AG04450 (cell line): ENCODE measurements at regions of chr21 and their contacts with region 1.

Region 1: DNA sequence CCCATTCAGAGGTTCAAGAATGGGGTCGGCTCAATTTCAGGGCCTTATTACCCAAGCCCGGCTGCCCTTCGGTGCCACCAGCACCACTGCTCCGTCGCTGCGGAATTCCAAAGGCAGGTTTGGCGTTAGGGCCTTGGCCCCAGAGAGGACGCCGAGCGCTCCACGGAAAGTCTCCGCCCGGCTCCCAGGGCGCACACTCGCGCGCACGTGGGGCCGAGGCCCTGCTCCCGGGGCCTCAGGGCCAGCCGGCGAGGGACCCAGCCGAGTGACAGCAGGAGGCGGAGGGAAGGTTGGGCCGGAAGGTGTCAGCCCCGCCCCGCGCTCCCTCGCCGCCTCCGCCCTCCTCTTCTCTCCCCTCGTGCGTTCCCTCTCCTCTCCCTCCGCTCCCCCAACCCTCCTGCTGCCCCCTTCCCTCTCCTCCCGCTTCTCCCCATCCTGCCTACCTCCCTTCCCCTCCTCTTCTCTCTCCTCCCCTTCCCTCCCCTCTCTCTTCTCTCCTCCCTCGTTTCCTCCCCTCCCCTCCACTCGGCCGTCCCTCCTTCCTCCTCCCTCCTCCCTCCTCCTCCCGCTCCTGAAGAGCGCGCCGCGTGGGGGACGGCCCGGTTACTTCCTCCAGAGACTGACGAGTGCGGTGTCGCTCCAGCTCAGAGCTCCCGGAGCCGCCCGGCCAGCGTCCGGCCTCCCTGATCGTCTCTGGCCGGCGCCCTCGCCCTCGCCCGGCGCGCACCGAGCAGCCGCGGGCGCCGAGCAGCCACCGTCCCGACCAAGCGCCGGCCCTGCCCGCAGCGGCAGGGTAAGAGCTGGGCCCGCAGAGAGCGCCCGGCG is at the start of gene ETS2:
- DNase-seq: peak; percentile 80
- H3K4me3 ChIP-seq: peak within 1 kb of the TSS; percentile 88
- H3K27ac ChIP-seq: peak within 1 kb of the TSS; percentile 41
- H3K27me3 ChIP-seq: no peaks in the 10 kb centered on the region
- CTCF ChIP-seq: no peak; the same call in 1 of the 2 replicates
- polyA plus RNA-seq, gene ETS2: 60.1 and 62.7 TPM in 2 replicates

Region 2: DNA sequence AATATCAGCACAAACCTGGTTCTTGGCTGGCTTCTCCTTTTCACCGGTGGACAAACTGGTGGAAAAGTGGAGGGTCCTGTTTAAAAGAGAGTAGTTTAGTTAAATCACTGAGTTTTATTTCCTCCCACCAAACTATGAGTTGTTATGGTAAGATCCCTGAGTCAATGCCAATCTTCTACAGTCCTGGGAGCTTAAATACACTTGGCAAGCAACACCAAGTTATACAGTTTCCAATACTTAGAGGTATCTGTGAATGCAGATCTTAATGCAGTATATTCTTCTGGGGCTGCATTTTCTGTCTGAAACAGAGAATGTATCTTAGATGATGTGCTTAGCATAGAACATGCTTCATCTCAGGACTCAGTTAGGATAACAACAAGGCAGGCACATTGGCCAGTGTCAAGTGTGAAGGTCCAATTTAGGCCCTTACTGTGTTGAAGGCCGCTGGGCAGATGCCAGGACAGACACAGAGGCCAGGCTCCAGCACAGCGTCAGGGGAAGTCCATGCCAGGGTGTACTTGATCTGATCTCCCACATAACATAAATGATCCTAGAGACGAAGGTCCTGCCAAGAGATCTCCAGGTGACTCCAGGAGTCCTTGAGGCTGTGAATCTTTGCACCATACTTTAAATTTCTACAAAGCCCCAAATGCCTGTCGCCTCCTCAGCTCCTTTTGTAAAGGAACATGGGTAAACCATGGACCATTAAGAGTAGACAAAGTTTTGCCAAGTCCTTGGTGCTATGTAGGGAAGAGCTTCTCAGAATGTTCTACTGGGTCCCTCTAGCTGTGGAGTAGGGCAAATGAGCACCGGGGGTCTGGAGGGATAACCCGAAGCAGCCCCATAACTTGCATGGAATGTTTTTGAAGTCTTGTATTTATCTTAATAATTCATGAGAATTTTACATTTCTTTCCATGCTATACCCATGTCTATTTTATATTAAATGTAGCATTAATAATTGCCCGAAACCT is 472.0 kb before region 1 on chr21:
- CTCF ChIA-PET with region 1: no interaction called
- POLR2A ChIA-PET with region 1: no interaction called
- DNase-seq: no peak
- H3K4me3 ChIP-seq: no peak overlapping the region
- H3K27ac ChIP-seq: no peak overlapping the region
- H3K27me3 ChIP-seq: peaks cover 4% of the 10 kb centered on the region
- CTCF ChIP-seq: peak; percentile 43

Region 3: GRCh38 chr21:38755681-38756371 is 49.7 kb before region 1 on chr21:
- CTCF ChIA-PET with region 1: interaction called, 3 read pairs
- POLR2A ChIA-PET with region 1: interaction called, 10 read pairs
- DNase-seq: peak; percentile 78
- H3K4me3 ChIP-seq: no peak overlapping the region
- H3K27ac ChIP-seq: peak overlapping the region; percentile 79
- H3K27me3 ChIP-seq: no peaks in the 10 kb centered on the region
- CTCF ChIP-seq: no peak

Region 4: DNA sequence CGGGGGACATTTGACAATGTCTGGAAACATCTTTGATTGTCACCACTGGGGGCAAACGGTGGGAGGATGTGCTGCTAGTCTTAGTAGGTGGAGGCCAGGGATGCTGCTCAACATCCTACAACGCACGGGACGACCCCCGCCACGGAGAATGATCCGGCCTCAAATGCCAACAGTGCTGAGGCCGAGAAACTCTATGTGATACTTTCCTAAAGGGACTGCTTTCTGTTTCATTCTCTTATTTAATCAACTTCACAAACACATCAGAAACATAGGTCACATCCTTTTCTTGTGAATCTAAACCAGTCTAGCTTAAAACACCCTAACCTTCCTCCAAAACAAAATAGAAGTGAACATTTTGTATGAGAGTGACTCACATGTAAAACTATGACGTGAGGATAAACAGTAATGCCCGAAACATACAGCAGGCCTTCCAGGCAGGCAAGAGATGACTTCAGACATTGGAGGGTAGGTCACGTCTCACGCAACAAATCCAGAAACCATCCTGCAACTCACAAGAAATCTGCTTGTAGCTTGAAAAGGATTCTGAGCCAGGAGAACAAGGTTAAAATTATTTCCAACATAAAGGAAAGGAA is 37.0 kb before region 1 on chr21:
- CTCF ChIA-PET with region 1: interaction called, 5 read pairs
- POLR2A ChIA-PET with region 1: interaction called, 18 read pairs
- DNase-seq: peak; percentile 96
- H3K4me3 ChIP-seq: peak overlapping the region; percentile 14; the same call in 1 of the 2 replicates
- H3K27ac ChIP-seq: peak overlapping the region; percentile 99
- H3K27me3 ChIP-seq: no peaks in the 10 kb centered on the region
- CTCF ChIP-seq: no peak; the same call in 1 of the 2 replicates

Region 5: GRCh38 chr21:39125752-39126485 is 320.4 kb after region 1 on chr21:
- CTCF ChIA-PET with region 1: interaction called, 13 read pairs
- POLR2A ChIA-PET with region 1: interaction called, 3 read pairs
- DNase-seq: peak; percentile 49
- H3K4me3 ChIP-seq: no peak overlapping the region
- H3K27ac ChIP-seq: no peak overlapping the region
- H3K27me3 ChIP-seq: no peaks in the 10 kb centered on the region
- CTCF ChIP-seq: peak; percentile 78